ENCODE measurements at regions of chr2 and their contacts with region 1.

Region 1: DNA sequence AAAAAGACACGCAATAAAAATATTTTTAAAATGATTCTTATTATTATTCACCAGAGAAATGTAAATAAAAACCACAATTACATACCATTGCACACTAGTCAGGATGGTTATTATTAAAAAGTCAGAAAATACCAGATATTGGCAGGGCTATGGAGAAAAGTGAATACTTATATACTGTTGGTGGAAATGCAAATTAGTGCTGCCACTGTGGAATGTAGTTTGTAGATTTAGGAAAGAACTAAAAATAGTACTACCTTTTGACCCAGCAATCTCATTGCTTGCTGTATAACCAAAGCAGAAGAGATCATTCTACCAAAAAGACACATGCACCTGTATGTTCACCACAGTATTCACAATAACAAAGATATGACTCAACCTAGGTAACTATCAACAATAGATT is 1237.3 kb upstream of the FAM98A start:
- DNase-seq: no peak
- H3K4me3 Mint-ChIP-seq: no peak overlapping the region
- H3K27ac Mint-ChIP-seq: no peak overlapping the region
- H3K4me1 Mint-ChIP-seq: no peaks in the 10 kb centered on the region
- H3K27me3 Mint-ChIP-seq: no peaks in the 10 kb centered on the region

Region 2: GRCh38 chr2:34305587-34305986 is 530.8 kb before region 1 on chr2:
- intact Hi-C with region 1: loop called (anchors 5 kb)
- DNase-seq: no peak
- H3K4me3 Mint-ChIP-seq: no peak overlapping the region
- H3K27ac Mint-ChIP-seq: no peak overlapping the region
- H3K4me1 Mint-ChIP-seq: no peaks in the 10 kb centered on the region
- H3K27me3 Mint-ChIP-seq: no peaks in the 10 kb centered on the region

Region 3: GRCh38 chr2:34949316-34949715 is 113.0 kb after region 1 on chr2:
- intact Hi-C with region 1: no loop called
- DNase-seq: no peak
- H3K4me3 Mint-ChIP-seq: no peak overlapping the region
- H3K27ac Mint-ChIP-seq: no peak overlapping the region
- H3K4me1 Mint-ChIP-seq: no peaks in the 10 kb centered on the region
- H3K27me3 Mint-ChIP-seq: no peaks in the 10 kb centered on the region